ENCODE measurements at regions of chr17 and their contacts with region 1.

Region 1: DNA sequence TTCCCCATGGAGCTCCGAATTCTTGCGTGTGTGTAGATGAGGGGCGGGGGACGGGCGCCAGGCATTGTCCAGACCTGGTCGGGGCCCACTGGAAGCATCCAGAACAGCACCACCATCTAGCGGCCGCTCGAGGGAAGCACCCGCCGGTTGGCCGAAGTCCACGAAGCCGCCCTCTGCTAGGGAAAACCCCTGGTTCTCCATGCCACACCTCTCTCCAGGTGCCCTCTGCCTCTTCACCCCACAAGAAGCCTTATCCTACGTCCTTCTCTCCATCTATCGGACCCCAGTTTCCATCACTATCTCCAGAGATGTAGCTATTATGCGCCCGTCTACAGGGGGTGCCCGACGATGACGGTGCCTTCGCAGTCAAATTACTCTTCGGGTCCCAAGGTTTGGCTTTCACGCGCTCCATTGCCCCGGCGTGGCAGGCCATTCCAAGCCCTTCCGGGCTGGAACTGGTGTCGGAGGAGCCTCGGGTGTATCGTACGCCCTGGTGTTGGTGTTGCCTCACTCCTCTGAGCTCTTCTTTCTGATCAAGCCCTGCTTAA is 617 bp upstream of the SENP3 start:
- DNase-seq: peak; percentile 98
- H3K4me3 ChIP-seq: peak overlapping the region; percentile 73 to 97 (median 86)
- H3K27ac ChIP-seq: peak overlapping the region; percentile 89 to 98 (median 97)
- H3K4me1 ChIP-seq: peaks cover 0 to 70% (median 64%) of the 10 kb centered on the region in 4 donors
- H3K27me3 ChIP-seq: no peaks in the 10 kb centered on the region
- CTCF ChIP-seq: peak; percentile 86 to 96 (median 89)
- EP300 ChIP-seq: no peak
- POLR2A ChIP-seq: no peak

Region 2: DNA sequence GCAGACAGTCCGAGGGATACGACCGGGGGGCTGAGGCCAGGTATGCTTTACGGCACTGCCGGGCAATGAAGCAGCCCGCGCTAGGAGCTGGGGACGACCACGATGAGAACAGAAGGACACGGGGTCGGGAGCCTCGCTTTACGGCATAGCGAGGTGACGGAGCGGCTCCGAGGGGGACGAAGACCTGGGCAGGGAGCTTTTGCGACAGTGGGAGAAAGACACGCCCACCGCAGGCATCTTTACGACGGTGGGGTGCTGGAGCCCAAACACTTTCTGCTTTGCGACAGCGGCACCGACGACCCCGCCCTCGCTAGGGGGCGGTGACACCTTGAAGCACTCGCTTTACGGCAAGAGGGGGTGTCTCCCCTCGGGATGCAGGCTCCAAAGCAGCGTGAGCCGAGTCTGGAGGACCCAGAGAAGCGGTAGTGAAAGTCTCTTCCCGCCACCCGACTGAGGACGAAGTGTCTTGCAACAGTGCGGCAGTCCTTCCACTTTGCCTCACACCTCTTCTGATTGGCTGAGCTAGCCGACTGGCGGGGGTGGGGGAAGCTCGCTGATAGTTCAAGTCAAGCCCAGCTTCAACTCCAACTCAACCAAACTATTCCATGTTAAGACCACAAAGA is 231.6 kb before region 1 on chr17:
- intact Hi-C with region 1: loop called (anchors 2 kb)
- DNase-seq: peak; percentile 100
- H3K4me3 ChIP-seq: peak overlapping the region; percentile 69 to 93 (median 83)
- H3K27ac ChIP-seq: peak overlapping the region; percentile 88 to 94 (median 94)
- H3K4me1 ChIP-seq: peaks cover 0 to 31% (median 20%) of the 10 kb centered on the region in 4 donors
- H3K27me3 ChIP-seq: no peaks in the 10 kb centered on the region
- CTCF ChIP-seq: no peak
- EP300 ChIP-seq: peak in 1 of 4 donors; percentile 41
- POLR2A ChIP-seq: peak; percentile 88 to 93

Region 3: DNA sequence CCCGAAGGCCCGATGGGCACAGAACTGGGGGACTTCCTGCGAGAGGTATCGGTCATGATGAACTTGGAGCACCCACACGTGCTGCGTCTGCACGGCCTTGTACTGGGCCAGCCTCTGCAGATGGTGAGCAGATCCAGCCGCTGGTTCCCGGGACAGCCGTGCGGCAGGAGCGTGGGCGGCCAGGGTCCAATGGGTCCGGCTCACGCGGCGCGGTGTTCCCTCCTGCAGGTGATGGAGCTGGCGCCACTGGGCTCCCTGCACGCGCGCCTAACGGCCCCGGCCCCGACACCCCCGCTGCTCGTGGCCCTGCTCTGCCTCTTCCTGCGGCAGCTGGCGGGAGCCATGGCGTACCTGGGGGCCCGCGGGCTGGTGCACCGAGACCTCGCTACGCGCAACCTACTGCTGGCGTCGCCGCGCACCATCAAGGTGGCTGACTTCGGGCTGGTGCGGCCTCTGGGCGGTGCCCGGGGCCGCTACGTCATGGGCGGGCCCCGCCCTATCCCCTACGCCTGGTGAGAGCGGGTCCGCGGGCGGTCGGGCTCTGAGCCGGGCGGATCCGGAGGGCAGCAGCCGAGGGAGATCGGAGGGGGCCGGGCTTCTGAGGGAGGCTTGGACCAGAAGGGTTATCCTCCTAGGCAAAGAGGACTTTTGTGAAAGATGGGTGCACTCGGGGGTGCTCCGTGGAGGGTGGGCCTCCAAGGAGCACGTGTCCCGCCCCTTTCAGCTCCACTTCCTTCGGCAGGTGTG is 177.2 kb before region 1 on chr17:
- intact Hi-C with region 1: loop called (anchors 5 kb)
- DNase-seq: peak; percentile 72
- H3K4me3 ChIP-seq: peak overlapping the region; percentile 12 to 49 (median 44)
- H3K27ac ChIP-seq: peak overlapping the region; percentile 48 to 55 (median 50)
- H3K4me1 ChIP-seq: peaks cover 2 to 34% (median 30%) of the 10 kb centered on the region in 4 donors
- H3K27me3 ChIP-seq: no peaks in the 10 kb centered on the region
- CTCF ChIP-seq: no peak
- EP300 ChIP-seq: no peak
- POLR2A ChIP-seq: no peak

Region 4: GRCh38 chr17:7466639-7467341 is 94.3 kb before region 1 on chr17:
- intact Hi-C with region 1: no loop called
- DNase-seq: peak; percentile 88
- H3K4me3 ChIP-seq: no peak overlapping the region
- H3K27ac ChIP-seq: peak overlapping the region; percentile 46 to 59 (median 50)
- H3K4me1 ChIP-seq: peaks cover 0 to 58% (median 33%) of the 10 kb centered on the region in 4 donors
- H3K27me3 ChIP-seq: no peaks in the 10 kb centered on the region
- CTCF ChIP-seq: no peak
- EP300 ChIP-seq: no peak
- POLR2A ChIP-seq: no peak

Region 5: DNA sequence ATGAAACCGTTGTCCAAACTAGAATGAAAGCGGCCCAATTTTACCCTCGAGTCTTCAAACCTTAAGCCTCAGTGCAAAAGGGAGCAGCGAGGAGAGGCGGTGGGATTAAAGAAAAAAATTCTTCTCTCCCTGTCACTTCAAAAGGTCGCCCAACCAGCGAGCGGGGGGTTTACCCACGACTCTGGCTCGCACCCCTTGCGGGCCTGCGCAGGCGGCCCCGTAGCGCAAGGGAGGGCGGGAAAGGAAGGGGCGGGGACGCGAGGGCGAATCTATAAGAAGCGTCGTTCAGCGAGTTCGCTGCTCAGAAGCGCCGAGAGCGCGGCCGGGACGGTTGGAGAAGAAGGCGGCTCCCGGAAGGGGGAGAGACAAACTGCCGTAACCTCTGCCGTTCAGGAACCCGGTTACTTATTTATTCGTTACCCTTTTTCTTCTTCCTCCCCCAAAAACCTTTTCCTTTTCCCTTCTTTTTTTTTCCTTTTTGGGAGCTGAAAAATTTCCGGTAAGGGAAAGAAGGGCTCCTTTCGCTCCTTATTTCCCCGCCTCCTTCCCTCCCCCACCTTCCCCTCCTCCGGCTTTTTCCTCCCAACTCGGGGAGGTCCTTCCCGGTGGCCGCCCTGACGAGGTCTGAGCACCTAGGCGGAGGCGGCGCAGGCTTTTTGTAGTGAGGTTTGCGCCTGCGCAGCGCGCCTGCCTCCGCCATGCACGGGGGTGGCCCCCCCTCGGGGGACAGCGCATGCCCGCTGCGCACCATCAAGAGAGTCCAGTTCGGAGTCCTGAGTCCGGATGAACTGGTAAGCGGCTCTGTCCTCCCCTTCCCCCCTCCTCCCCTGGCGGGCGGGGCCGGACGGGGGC is 76.8 kb before region 1 on chr17 and contains the start of gene POLR2A:
- intact Hi-C with region 1: loop called (anchors 1 kb)
- DNase-seq: peak; percentile 100
- H3K4me3 ChIP-seq: peak within 1 kb of the TSS; percentile 63 to 72 (median 64)
- H3K27ac ChIP-seq: peak within 1 kb of the TSS; percentile 94 to 100 (median 97)
- H3K4me1 ChIP-seq: peaks cover 0 to 74% (median 61%) of the 10 kb centered on the region in 4 donors
- H3K27me3 ChIP-seq: no peaks in the 10 kb centered on the region
- CTCF ChIP-seq: no peak
- EP300 ChIP-seq: peak in 2 of 4 donors; percentile 29 to 70
- POLR2A ChIP-seq: peak; percentile 100
- total RNA-seq, gene POLR2A: 30.1 to 43.2 (median 36.5) TPM

Region 6: DNA sequence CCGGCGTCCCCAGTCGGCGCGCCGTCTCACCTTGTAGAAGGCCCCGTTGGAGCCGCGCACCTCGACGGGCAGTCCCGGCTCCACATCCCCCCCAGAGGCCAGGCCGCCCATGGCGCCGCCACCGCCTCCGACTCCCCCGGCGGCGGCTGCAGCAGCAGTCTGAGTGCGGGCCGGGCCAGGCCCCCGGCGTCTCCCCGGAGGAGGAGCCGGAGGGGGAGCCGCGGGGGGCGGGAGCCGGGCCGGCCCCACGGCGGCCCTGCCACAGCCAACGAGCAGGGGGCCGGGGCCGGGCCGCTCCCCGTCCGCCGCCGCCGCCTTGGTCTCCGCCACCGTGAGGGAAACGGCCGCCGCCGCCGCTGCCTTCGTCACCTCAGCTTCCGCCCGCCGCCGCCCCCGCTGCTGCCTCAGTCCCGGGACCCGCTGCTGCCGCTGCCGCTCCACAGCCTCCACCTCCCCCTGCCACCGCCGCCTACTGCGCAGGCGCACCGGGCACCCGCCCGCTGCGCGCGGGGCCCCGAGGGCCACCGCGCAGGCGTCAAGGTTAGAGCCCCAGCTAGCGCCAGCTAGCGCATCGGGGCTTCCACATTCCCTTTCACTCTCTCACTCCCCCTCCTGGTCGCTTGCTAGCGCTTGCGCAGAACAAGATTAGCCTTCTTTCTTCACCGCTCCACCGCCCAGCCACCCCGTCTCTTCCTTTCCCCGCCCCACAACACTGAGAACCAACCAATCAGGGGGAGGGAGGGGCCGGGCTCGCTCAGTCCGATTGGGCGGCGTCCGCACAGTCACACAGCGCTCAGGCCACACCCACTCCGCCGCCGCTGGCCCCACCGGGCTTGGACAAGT is 53.5 kb after region 1 on chr17 and contains the start of gene FXR2:
- intact Hi-C with region 1: loop called (anchors 2 kb)
- DNase-seq: peak; percentile 100
- H3K4me3 ChIP-seq: peak within 1 kb of the TSS; percentile 57 to 95 (median 80)
- H3K27ac ChIP-seq: peak within 1 kb of the TSS; percentile 91 to 100 (median 95)
- H3K4me1 ChIP-seq: peaks cover 0 to 47% (median 40%) of the 10 kb centered on the region in 4 donors
- H3K27me3 ChIP-seq: no peaks in the 10 kb centered on the region
- CTCF ChIP-seq: peak in 3 of 4 experiments; percentile 49 to 52 (median 51)
- EP300 ChIP-seq: no peak
- POLR2A ChIP-seq: no peak
- total RNA-seq, gene FXR2: 33.8 to 35.5 (median 34.6) TPM

Measured in sigmoid colon (tissue), 7 donors.